AG04450 (cell line): ENCODE measurements at regions of chr19 and their contacts with region 1.

Region 1: GRCh38 chr19:18636183-18636968 is 452 bp upstream of the KLHL26 start:
- DNase-seq: peak; percentile 88
- H3K4me3 ChIP-seq: peak overlapping the region; percentile 60
- H3K27ac ChIP-seq: no peak overlapping the region
- H3K27me3 ChIP-seq: peaks cover 2% of the 10 kb centered on the region
- CTCF ChIP-seq: no peak

Region 2: DNA sequence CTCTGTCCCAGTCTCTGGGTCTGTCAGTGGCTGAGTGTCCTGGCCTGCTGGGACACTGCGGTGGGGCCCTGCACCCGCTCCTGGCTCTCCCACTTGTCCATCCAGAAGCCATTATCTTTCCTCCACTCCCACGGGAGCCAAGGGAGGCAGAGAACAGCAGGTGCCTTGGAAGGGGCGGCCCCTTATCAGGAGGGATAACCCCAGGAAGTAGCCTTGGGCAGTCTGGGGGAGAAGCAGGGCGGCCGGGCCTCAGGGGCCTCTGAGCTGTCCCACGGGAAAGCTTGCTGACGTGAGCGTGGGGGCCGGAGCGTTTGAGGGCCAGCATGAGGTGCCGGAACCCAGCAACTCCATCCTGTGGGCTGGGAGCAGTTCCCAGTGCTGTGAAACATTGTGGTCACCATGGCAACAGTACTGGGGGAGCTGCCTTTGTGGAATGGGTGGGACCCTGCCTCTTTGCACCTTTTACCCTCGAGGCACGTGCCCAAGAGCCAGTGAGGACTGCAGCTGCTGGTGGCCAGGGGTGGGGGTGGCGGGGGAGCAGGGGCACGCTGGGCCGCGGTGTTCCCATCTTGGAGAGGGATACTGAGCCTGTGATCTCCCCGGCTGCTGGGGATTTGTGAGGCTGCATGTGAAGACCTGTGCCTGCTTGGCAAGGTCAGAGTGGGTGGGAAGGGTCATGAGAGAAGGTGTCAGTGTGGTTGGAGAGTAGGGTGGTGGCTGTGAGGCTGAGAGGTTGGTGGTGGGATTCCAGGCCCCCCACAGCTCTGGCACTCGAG is 21.4 kb after region 1 on chr19:
- CTCF ChIA-PET with region 1: no interaction called
- POLR2A ChIA-PET with region 1: interaction called, 11 read pairs
- DNase-seq: peak; percentile 45
- H3K4me3 ChIP-seq: no peak overlapping the region
- H3K27ac ChIP-seq: no peak overlapping the region
- H3K27me3 ChIP-seq: no peaks in the 10 kb centered on the region
- CTCF ChIP-seq: no peak